Heart left ventricle (tissue), 16 donors: ENCODE measurements at regions of chr9 and their contacts with region 1.

Region 1: DNA sequence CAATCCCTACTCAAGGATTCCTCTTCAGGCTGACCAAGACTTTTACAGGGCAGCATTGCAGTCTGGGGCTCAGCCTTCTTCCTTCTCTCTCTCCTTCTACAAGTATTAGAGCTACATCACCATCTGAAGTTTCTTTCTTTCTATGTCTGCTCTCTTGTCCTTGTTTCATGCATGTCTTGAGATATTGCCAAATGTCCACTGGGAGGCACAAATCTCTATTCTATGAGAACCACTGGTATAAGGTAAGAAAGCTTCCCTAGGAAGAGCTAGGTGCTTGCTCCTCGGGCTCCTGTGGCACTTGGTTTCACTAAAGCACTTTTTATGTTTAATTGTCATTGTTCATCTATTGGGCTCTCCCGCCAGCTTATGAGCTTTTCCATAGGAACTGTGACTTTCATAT is 289.2 kb upstream of the PCSK5 start:
- DNase-seq: no peak
- ATAC-seq: no peak
- H3K4me3 ChIP-seq: no peak overlapping the region
- H3K27ac ChIP-seq: no peak overlapping the region
- H3K4me1 ChIP-seq: peaks cover 0 to 7% (median 0%) of the 10 kb centered on the region in 12 donors
- H3K27me3 ChIP-seq: no peaks in the 10 kb centered on the region
- CTCF ChIP-seq: peak in 7 of 12 donors; percentile 5 to 30 (median 15)
- POLR2A ChIP-seq: no peak

Region 2: GRCh38 chr9:75265525-75265972 is 335.7 kb before region 1 on chr9:
- intact Hi-C with region 1: loop called in 1 of 10 experiments (anchors 10 kb)
- DNase-seq: peak in 2 of 5 donors; percentile 8 to 37
- ATAC-seq: peak in 3 of 4 donors; percentile 66 to 74 (median 74)
- H3K4me3 ChIP-seq: no peak overlapping the region
- H3K27ac ChIP-seq: no peak overlapping the region
- H3K4me1 ChIP-seq: peaks cover 0 to 7% (median 0%) of the 10 kb centered on the region in 12 donors
- H3K27me3 ChIP-seq: no peaks in the 10 kb centered on the region
- CTCF ChIP-seq: peak; percentile 80 to 97 (median 90)
- POLR2A ChIP-seq: no peak

Region 3: DNA sequence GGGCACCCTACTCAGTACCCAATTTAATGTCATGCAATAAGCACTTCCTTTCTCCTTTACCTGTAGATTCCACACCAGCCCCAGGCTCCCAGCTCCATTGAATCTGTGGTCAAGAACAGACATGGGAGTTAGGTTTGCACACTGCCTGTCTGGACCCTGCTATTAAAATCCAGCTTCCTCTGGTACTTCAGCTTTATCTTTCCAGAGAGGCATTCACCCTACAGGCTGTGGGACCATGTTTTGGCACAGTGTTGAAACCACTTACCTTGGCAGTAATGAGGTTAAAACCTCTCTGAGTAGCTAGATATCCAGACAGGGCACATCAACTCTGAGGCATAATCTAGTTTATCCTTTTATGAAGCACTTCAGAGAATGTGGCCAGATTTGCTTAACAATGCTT is 97.7 kb after region 1 on chr9:
- intact Hi-C with region 1: no loop called
- DNase-seq: no peak
- ATAC-seq: peak in 3 of 4 donors; percentile 42 to 85 (median 78)
- H3K4me3 ChIP-seq: no peak overlapping the region
- H3K27ac ChIP-seq: peak overlapping the region in 8 of 12 donors; percentile 22 to 66 (median 48)
- H3K4me1 ChIP-seq: peaks cover 0 to 10% (median 4%) of the 10 kb centered on the region in 12 donors
- H3K27me3 ChIP-seq: no peaks in the 10 kb centered on the region
- CTCF ChIP-seq: no peak
- POLR2A ChIP-seq: no peak